Activated T-helper 1 cell treated with anti-CD3 and anti-CD28 coated beads, Interleukin-12 subunit alpha, Interleukin-12 subunit beta, Interleukin-2, Interleukin-4 antibody, amounts not matched to agents 30 ng/mL and 10 ng/mL and 1 ng/mL, durations not matched to agents 14 hours and 24 hours and 36 hours (primary cell): ENCODE measurements at regions of chr1 and their contacts with region 1.

Region 1: GRCh38 chr1:84506002-84506728 is at the starts of genes GNG5 and SPATA1:
- DNase-seq: peak; percentile 96
- H3K4me3 Mint-ChIP-seq: peak within 1 kb of the TSS; percentile 98
- H3K27ac Mint-ChIP-seq: peak within 1 kb of the TSS; percentile 98
- H3K4me1 Mint-ChIP-seq: peaks cover 38% of the 10 kb centered on the region
- H3K27me3 Mint-ChIP-seq: no peaks in the 10 kb centered on the region
- total RNA-seq, gene GNG5: 107 and 110 TPM in 2 replicates
- total RNA-seq, gene SPATA1: 1.2 and 1.3 TPM in 2 replicates

Region 2: DNA sequence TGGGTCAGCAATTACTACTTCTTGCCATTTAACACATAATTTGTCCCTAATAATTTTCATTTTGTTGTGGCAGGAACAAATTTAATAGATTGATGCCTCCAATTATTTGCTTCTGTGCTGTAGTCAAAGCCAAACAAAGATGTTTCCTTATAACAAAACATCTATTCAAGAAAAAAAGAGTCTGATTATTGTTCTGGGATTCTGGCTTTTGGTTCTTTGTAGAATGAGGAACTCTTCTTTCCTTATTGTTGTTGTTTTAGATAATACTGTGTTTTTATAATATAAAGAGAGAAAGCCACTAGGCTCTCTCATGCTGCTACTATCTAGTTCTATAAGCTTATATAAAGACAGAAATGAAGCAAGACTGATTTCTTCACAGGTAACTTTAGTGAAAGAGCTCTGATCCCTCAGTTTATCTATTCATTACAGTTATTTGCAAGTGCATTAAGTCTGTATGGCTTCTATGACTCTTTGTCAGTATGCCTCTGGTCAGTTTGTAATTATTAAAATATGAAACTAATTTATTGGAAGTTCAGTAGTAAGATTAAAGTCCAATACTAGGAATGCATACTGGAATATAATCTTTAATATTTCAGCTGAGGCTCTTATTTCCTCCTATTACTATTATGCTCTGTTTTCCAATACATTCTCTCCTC is 324.7 kb before region 1 on chr1:
- intact Hi-C with region 1: no loop called
- DNase-seq: no peak
- H3K4me3 Mint-ChIP-seq: no peak overlapping the region
- H3K27ac Mint-ChIP-seq: no peak overlapping the region
- H3K4me1 Mint-ChIP-seq: no peaks in the 10 kb centered on the region
- H3K27me3 Mint-ChIP-seq: no peaks in the 10 kb centered on the region

Region 3: DNA sequence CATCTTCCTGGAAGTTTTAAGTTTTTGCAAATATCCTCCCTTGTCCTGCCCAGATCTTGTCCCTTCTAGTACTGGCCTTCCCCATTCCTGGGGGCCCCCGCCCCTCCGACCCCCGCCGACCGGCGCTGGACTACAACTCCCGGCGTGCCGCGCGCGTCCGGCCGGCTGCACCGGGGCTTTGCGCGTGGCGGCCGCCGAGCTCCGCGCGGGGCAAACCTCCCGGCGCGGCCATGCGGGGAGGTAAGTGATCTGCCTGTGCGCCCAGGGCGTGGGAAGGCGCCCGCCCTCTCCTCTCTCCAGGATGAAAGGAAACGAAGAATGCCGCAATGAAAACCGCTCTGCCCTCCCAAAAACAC is 207.9 kb before region 1 on chr1:
- intact Hi-C with region 1: loop called (anchors 10 kb)
- DNase-seq: peak; percentile 46
- H3K4me3 Mint-ChIP-seq: peak overlapping the region; percentile 86
- H3K27ac Mint-ChIP-seq: peak overlapping the region; percentile 68
- H3K4me1 Mint-ChIP-seq: peaks cover 39% of the 10 kb centered on the region
- H3K27me3 Mint-ChIP-seq: peaks cover 5% of the 10 kb centered on the region

Region 4: GRCh38 chr1:84478876-84479868 is 27.0 kb before region 1 on chr1 and contains the start of gene RPF1:
- intact Hi-C with region 1: loop called (anchors 1 kb)
- DNase-seq: peak; percentile 70
- H3K4me3 Mint-ChIP-seq: peak within 1 kb of the TSS; percentile 98
- H3K27ac Mint-ChIP-seq: peak within 1 kb of the TSS; percentile 97
- H3K4me1 Mint-ChIP-seq: peaks cover 34% of the 10 kb centered on the region
- H3K27me3 Mint-ChIP-seq: peaks cover 28% of the 10 kb centered on the region
- total RNA-seq, gene RPF1: 65.2 and 65.5 TPM in 2 replicates

Region 5: DNA sequence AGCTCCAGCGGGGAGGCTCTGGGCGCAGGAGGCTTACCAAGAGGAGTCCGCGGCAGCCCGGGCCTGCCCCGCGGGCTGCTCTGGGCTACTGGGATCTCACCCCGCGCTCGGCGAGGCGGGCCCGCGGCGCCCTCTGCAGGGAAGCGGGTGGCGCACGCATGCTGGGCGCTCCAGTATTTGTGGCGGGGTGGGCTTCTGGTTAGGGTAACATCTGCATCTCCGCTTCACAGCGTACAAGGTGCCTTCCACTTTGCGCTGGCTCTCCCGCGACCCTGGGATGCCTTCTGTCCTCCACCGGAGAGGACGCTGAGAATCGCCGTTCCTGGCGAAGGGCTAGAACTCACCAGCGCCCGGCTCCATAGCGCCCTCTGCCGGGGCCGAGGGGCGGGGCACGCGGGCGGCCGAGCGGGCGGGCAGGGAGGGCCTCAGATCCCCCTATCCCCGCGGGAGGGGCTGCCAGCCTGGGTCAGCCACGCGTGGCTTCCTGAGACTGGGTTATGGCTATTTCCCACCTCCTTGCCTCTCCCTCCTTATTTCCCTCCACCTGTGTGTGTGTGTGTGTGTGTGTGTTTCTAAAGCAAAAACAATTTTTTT is 114.7 kb after region 1 on chr1:
- intact Hi-C with region 1: loop called (anchors 1 kb)
- DNase-seq: peak; percentile 79
- H3K4me3 Mint-ChIP-seq: peak overlapping the region; percentile 88
- H3K27ac Mint-ChIP-seq: peak overlapping the region; percentile 80
- H3K4me1 Mint-ChIP-seq: peaks cover 23% of the 10 kb centered on the region
- H3K27me3 Mint-ChIP-seq: no peaks in the 10 kb centered on the region

Region 6: DNA sequence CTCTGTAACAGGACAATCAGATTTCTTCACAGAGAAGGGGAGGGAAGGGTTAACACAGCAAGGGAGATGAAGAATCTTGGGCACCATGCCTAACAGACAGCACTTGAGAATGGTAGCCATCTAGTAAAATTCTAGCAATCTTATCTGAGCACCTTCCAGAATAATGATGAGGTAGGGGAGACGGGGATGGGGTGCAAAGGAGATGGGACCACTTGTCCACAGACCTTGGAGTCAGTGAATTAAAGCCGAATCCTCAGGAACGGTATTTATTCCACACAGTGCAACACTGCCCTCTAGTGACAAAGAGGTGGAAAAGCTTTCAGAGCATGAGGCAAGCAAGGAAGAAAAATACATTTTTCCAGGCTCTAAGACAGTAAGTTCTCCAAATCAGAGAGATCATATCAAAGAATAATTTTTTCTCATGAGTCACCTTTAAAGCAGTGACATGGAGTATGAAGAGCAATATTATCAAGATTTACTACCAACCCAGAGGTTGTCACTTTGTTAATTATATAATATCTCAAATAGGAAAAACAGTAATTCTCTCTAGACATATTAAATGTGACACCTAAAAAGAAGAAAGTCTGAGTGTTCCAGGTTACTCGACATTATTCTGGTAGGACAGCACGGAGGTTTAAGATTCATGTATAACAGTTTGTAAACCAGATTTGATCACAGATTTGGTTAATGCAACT is 430.1 kb after region 1 on chr1:
- intact Hi-C with region 1: loop called (anchors 5 kb)
- DNase-seq: peak; percentile 26
- H3K4me3 Mint-ChIP-seq: no peak overlapping the region
- H3K27ac Mint-ChIP-seq: no peak overlapping the region
- H3K4me1 Mint-ChIP-seq: peaks cover 7% of the 10 kb centered on the region
- H3K27me3 Mint-ChIP-seq: no peaks in the 10 kb centered on the region